ENCODE measurements at regions of chr19 and their contacts with region 1.

Region 1: GRCh38 chr19:13856497-13856896 is 20.4 kb upstream of the NANOS3 start:
- DNase-seq: no peak
- H3K4me3 ChIP-seq: no peak overlapping the region
- H3K4me3 Mint-ChIP-seq: no peak overlapping the region
- H3K27ac Mint-ChIP-seq: no peak overlapping the region
- H3K4me1 ChIP-seq: peaks cover 37% of the 10 kb centered on the region
- H3K4me1 Mint-ChIP-seq: peaks cover 16% of the 10 kb centered on the region
- H3K27me3 ChIP-seq: no peaks in the 10 kb centered on the region
- H3K27me3 Mint-ChIP-seq: no peaks in the 10 kb centered on the region
- CTCF ChIP-seq: no peak

Region 2: GRCh38 chr19:13917888-13918406 is 61.5 kb after region 1 on chr19:
- CTCF ChIA-PET with region 1: no interaction called
- POLR2A ChIA-PET with region 1: no interaction called
- intact Hi-C with region 1: no loop called
- DNase-seq: no peak
- H3K4me3 ChIP-seq: no peak overlapping the region
- H3K4me3 Mint-ChIP-seq: no peak overlapping the region
- H3K27ac Mint-ChIP-seq: no peak overlapping the region
- H3K4me1 ChIP-seq: no peaks in the 10 kb centered on the region
- H3K4me1 Mint-ChIP-seq: no peaks in the 10 kb centered on the region
- H3K27me3 ChIP-seq: no peaks in the 10 kb centered on the region
- H3K27me3 Mint-ChIP-seq: no peaks in the 10 kb centered on the region
- CTCF ChIP-seq: no peak

Region 3: DNA sequence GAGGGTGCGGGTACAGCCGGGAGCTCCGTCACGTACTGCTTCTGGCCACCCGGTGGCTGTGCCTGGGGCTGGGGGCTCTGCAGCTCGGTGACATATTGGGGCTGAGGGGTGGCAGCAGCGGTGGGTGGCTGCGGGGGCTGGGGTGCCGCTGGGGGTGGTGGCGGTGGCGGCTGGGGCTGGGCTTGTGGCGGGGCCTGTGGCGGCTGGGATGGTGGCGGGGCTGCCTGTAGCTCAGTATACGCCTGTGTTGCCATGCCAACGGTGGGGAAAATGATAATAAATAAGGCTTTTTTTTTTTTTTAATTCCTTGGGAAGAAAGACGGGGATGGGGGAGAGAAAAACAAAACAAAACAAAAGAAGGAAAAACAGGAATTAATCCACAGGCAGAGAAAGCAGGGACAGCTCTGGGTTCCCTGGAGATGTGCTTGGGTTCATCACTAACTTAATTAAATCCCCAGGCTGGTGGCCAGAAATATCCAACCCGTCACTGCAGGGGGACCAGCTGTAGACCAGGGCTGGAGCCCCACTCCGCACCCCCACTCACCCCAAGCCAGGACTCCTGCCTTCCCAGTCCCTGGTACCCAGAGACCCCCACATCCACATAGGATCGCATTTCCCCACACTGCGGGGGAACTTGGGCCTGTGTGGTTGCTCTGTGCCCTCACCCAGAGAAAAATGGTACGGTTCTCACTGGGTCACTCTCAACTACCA is 137.2 kb after region 1 on chr19:
- CTCF ChIA-PET with region 1: no interaction called
- POLR2A ChIA-PET with region 1: interaction called, 13 read pairs
- intact Hi-C with region 1: no loop called
- DNase-seq: no peak
- H3K4me3 ChIP-seq: no peak overlapping the region
- H3K4me3 Mint-ChIP-seq: no peak overlapping the region
- H3K27ac Mint-ChIP-seq: no peak overlapping the region
- H3K4me1 ChIP-seq: no peaks in the 10 kb centered on the region
- H3K4me1 Mint-ChIP-seq: peaks cover 10% of the 10 kb centered on the region
- H3K27me3 ChIP-seq: no peaks in the 10 kb centered on the region
- H3K27me3 Mint-ChIP-seq: no peaks in the 10 kb centered on the region
- CTCF ChIP-seq: no peak